ENCODE measurements at regions of chr19 and their contacts with region 1.

Region 1: GRCh38 chr19:28633319-28634018 is 579.5 kb downstream of the UQCRFS1 start:
- H3K4me3 ChIP-seq: no peak overlapping the region
- H3K27ac ChIP-seq: no peak overlapping the region
- H3K4me1 ChIP-seq: peaks cover 17% of the 10 kb centered on the region
- CTCF ChIP-seq: peak; percentile 98

Region 2: GRCh38 chr19:28324275-28325060 is 309.0 kb before region 1 on chr19:
- CTCF ChIA-PET with region 1: interaction called, 35 read pairs
- POLR2A ChIA-PET with region 1: no interaction called
- H3K4me3 ChIP-seq: no peak overlapping the region
- H3K27ac ChIP-seq: no peak overlapping the region
- H3K4me1 ChIP-seq: peaks cover 9% of the 10 kb centered on the region
- CTCF ChIP-seq: peak; percentile 54

Region 3: GRCh38 chr19:28466107-28467045 is 167.1 kb before region 1 on chr19:
- CTCF ChIA-PET with region 1: interaction called, 175 read pairs
- POLR2A ChIA-PET with region 1: no interaction called
- H3K4me3 ChIP-seq: no peak overlapping the region
- H3K27ac ChIP-seq: no peak overlapping the region
- H3K4me1 ChIP-seq: peaks cover 11% of the 10 kb centered on the region
- CTCF ChIP-seq: peak; percentile 80

Region 4: GRCh38 chr19:28596561-28597071 is 36.9 kb before region 1 on chr19:
- CTCF ChIA-PET with region 1: interaction called, 14 read pairs
- POLR2A ChIA-PET with region 1: no interaction called
- H3K4me3 ChIP-seq: no peak overlapping the region
- H3K27ac ChIP-seq: peak overlapping the region; percentile 50
- H3K4me1 ChIP-seq: peaks cover 17% of the 10 kb centered on the region
- CTCF ChIP-seq: no peak

Region 5: GRCh38 chr19:28619816-28620429 is 13.5 kb before region 1 on chr19:
- CTCF ChIA-PET with region 1: interaction called, 79 read pairs
- POLR2A ChIA-PET with region 1: no interaction called
- H3K4me3 ChIP-seq: no peak overlapping the region
- H3K27ac ChIP-seq: no peak overlapping the region
- H3K4me1 ChIP-seq: no peaks in the 10 kb centered on the region
- CTCF ChIP-seq: no peak

Region 6: DNA sequence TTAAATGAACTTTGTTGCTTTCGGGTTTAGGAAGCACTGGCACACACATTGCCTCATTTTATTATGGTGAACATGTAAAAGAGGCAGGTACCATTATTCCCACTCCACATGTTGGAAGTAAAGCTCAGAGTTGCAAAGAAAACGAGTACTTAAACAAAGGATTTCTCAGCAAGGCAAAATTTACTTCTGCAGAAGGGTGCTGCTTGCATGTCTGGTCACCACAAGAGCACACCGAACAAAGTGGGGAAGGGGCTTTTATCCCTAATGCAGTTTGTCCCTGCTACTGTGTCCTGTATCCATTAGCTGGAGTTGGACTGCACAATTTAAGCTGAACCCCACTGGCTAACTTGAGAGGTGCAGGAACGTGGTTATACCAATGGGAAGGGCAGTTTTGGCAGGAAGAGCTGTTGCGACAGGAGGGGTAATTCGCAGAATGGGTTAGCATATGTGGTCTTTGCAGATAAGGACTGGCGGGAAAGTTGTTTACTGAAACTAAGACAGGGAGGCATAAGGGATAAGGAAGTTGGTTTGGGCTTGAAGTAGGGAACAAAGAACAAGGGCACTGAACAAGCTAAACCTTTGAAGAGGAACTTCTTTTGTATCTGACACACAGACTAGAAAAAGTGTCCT is 34.0 kb after region 1 on chr19:
- CTCF ChIA-PET with region 1: interaction called, 79 read pairs
- POLR2A ChIA-PET with region 1: no interaction called
- H3K4me3 ChIP-seq: no peak overlapping the region
- H3K27ac ChIP-seq: no peak overlapping the region
- H3K4me1 ChIP-seq: peaks cover 18% of the 10 kb centered on the region
- CTCF ChIP-seq: no peak

Region 7: GRCh38 chr19:28878862-28879566 is 245.5 kb after region 1 on chr19:
- CTCF ChIA-PET with region 1: interaction called, 26 read pairs
- POLR2A ChIA-PET with region 1: no interaction called
- H3K4me3 ChIP-seq: no peak overlapping the region
- H3K27ac ChIP-seq: no peak overlapping the region
- H3K4me1 ChIP-seq: peaks cover 4% of the 10 kb centered on the region; the same call in 1 of the 2 replicates
- CTCF ChIP-seq: peak; percentile 65; the same call in 1 of the 2 replicates